HEK293 (cell line): ENCODE measurements at regions of chr3 and their contacts with region 1.

Region 1: DNA sequence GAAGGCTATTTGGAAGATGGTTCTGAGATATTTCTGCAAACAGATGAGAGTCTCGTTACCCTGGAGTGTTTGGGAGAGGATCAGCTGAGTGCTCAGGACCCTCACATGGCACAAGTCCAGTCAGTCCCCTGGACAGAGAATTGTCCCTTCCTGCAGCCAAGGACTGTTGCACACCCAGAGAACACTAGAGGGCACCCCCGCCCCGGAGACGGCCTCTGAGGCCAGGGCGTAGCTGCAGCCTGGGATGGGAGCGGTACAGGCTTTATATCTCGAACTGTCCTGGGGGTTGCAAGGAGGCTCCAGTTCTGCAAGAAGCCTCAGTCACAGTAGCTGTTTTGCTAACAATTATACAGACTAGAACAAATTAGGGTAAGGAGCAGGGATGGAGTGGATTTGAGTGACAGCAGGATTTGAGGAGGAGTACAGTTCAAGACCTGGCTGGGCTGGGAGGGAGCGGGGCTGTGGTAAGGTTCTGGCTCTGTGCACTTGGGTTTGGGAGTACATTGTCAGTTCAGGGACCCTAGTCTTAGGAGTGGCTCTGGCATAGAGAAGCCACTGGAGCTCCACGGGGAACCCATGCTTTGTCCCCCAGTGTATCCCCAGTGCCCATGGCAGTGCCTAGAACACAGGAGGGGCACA is 67.6 kb upstream of the HACD2 start:
- H3K4me3 ChIP-seq: no peak overlapping the region
- H3K27ac ChIP-seq: no peak overlapping the region
- H3K4me1 ChIP-seq: no peaks in the 10 kb centered on the region
- CTCF ChIP-seq: peak; percentile 76

Region 2: GRCh38 chr3:123642182-123642956 is 10.1 kb before region 1 on chr3:
- CTCF ChIA-PET with region 1: interaction called, 82 read pairs
- POLR2A ChIA-PET with region 1: no interaction called
- H3K4me3 ChIP-seq: no peak overlapping the region
- H3K27ac ChIP-seq: no peak overlapping the region
- H3K4me1 ChIP-seq: no peaks in the 10 kb centered on the region
- CTCF ChIP-seq: no peak

Region 3: DNA sequence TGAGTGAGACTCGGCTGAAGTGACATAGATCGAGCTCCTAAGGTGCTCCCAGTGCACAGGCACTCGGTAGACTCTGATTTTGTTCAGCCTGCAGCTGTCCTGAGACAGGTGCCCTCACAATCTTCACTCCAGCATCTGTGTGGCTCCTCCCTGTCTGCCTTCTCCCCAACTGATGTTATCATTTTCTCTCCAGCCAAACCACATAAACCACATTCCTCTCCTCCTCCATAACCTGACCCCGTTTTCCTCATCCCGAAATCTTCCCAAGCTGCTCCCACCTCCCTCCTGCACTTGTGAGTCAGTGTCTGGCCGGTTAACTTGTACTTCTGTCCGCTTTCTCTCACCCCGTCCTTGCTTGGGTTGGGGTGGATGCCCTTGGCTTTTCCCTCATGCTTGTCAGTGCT is 25.6 kb after region 1 on chr3:
- CTCF ChIA-PET with region 1: interaction called, 14 read pairs
- POLR2A ChIA-PET with region 1: no interaction called
- H3K4me3 ChIP-seq: no peak overlapping the region
- H3K27ac ChIP-seq: no peak overlapping the region
- H3K4me1 ChIP-seq: no peaks in the 10 kb centered on the region
- CTCF ChIP-seq: no peak

Region 4: DNA sequence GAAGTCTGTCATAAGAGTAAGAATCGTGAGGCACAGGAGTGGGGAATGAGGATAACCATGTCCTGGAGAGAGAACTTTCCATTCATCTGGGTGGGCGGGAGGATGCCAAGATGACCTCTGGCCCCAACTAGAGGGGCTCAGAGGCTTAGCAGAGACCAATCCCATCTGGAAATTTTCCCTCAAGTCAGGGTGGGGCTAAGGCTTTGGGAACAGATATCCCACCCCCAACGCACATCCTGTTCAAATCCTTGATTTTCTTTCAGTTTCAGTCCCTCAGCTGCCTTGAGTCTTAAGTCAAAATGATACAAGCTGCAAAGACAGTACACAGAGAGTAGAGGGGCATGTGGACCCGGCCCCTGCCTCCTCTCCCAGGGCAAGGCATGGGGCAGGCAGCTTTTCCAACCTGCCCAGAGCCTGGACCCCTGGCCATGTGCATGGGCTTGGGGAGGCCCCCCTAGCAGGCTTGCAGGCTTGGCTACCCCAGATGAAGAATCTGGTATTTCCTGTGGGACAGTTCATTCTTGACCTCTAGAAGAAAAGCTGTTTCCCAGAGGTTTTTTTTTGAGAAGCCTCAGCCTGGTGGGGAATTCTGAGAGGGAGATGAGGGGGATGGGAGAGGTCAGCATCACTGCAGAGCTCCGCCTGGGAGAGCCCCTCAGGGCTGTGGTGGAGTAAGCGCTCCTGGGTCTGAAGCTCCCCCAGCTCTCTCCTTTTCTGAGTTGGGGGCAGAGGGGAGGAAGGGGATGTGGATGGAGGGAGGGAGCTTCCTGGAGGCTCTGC is 42.1 kb after region 1 on chr3:
- CTCF ChIA-PET with region 1: interaction called, 16 read pairs
- POLR2A ChIA-PET with region 1: no interaction called
- H3K4me3 ChIP-seq: no peak overlapping the region
- H3K27ac ChIP-seq: no peak overlapping the region
- H3K4me1 ChIP-seq: no peaks in the 10 kb centered on the region
- CTCF ChIP-seq: no peak

Region 5: DNA sequence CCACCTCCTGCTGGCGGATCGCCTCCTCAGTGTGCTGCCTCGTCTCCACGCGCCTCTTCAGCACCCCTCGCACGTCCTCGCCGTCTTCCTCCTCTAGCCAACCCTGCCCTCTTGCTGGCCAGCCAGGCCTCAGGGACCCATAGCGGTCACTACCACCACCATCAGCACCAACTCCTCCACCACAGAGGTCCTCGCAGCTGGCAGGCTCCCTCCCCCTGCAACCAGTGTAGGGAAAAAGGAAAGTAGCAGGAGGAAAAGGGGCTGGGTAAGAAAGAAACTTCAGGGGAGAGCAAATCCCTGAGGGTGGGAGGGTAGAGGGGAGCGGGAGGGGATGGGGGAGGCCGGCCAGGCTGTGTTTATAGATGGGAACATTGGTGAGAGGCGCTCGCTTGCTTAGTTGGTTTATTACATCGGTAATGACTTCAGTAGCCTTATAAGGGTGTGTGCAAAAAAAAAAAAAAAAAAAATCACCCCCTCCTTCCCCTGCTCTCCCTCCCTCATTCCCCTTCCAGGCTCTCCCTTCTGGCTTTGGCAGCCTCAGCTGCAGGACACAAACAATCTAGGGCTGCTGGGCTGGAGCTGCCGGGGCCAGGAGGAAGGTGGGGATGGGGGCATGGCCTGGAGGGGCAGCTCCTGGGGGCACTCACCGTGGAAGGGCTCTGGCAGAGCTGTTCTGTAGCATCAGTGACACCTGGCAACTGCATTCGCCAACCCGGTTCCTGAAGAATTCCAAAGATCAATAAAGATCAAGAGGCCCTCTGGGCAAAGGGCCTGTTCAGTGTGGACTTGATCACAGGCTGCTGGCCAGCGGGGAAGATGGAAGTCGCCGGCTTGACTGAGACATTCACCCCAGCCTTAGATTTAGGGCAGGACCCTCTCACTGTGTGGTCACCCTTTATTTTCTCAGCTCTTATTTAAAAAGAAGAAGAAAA is 48.6 kb after region 1 on chr3:
- CTCF ChIA-PET with region 1: interaction called, 80 read pairs
- POLR2A ChIA-PET with region 1: no interaction called
- H3K4me3 ChIP-seq: no peak overlapping the region
- H3K27ac ChIP-seq: no peak overlapping the region
- H3K4me1 ChIP-seq: no peaks in the 10 kb centered on the region
- CTCF ChIP-seq: no peak

Region 6: DNA sequence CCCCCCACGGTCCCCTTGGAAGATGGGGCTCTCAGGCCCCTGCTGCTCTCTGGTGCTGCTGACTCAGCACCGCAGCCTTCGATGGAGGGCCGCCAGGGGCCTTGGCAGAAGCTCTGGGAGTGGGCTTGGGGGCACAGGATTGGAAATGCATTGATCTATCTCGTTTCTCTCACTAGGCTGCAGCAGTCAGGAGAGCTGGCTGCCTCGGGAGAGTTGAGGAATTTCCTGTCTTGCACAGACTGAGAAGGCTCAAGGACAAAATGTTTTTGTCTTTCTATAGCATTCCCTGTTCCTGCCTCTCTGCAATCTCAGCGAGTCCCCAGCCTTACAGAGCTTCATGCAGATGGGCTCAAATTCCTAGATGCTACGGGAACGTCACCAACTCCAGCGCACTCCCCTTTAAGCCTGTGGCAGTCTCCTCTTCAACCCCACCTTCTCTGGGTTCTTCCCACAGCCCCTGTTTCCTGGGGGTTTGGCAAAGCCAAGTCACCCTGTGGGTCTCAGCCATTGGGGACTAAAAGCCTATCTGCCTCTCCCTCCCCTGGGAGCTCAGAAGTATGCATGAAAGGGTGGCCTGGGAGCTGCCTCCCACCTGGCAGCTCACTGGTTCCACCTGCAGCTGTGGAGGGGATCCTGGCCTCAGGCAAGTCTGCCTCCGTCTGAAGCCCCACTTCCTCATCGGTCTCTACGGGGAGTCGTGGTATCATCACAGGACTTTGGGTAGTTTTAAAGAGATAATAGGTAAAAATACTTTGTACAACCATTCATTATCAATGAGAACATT is 59.8 kb after region 1 on chr3:
- CTCF ChIA-PET with region 1: interaction called, 52 read pairs
- POLR2A ChIA-PET with region 1: no interaction called
- H3K4me3 ChIP-seq: no peak overlapping the region
- H3K27ac ChIP-seq: no peak overlapping the region
- H3K4me1 ChIP-seq: no peaks in the 10 kb centered on the region
- CTCF ChIP-seq: no peak

Region 7: GRCh38 chr3:123723522-123724168 is 71.2 kb after region 1 on chr3:
- CTCF ChIA-PET with region 1: interaction called, 81 read pairs
- POLR2A ChIA-PET with region 1: no interaction called
- H3K4me3 ChIP-seq: no peak overlapping the region
- H3K27ac ChIP-seq: no peak overlapping the region
- H3K4me1 ChIP-seq: no peaks in the 10 kb centered on the region
- CTCF ChIP-seq: 0 out of 2 replicates have a peak, but pooled peaks have one; percentile 29